ENCODE measurements at regions of chr22 and their contacts with region 1.

Region 1: DNA sequence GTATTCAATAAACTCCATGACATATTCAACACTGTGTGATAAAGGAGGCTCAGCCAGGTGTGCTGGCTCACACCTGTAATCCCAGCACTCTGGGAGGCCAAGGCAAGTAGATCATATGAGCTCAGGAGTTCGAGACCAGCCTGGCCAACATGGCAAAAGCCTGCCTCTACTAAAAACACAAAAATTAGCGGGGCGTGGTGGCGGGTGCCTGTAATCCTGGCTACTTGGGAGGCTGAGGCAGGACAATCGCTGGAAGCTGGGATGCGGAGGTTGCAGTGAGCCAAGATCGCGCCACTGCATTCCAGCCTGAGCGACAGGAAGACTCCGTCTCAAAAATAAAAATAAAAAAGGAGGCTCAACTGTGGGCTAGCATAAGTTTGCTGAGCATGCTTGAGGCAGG is 4.1 kb upstream of the SLC25A18 start:
- DNase-seq: no peak
- H3K4me3 ChIP-seq: no peak overlapping the region
- H3K27ac ChIP-seq: no peak overlapping the region
- H3K4me1 ChIP-seq: no peaks in the 10 kb centered on the region
- H3K27me3 ChIP-seq: no peaks in the 10 kb centered on the region; the same call in 1 of the 2 replicates
- CTCF ChIP-seq: no peak
- EP300 ChIP-seq: no peak
- RAD21 ChIP-seq: no peak

Region 2: DNA sequence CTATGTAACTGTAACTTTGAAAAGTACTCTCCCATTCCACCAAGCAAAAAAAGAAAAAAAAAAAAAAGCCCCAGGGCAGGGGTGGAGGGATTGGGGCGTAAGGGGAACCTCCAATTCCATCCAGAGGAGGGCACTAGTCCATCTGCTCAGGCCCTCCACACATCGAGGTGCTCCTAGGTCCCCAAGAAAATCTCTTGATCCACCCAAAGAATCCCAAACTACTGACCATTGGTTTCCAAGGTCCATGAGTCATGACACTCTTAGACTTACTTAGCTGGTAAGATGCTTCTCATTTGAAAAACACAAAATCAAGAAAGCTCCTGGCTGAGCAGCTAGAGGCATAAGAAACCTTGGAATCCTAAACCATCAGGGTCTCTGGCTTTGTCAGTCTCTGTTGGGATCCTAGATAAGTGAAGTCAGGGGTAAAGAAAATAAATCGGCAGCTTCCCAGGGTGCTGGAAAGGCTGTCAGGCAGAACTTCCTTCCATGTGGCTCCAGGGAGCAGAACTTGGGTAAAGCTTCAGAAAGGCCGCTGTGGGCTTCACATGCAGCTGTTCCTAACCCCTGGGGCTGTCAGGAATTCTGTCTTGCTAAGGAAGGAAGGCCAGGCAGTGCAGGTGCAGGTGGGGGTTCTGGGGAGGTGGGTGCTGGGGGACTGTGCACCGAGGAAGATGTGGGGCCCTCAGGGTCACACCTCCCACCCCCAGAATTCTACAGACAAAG is 290.5 kb before region 1 on chr22:
- CTCF ChIA-PET with region 1: no interaction called
- POLR2A ChIA-PET with region 1: no interaction called
- DNase-seq: no peak
- H3K4me3 ChIP-seq: no peak overlapping the region
- H3K27ac ChIP-seq: no peak overlapping the region
- H3K4me1 ChIP-seq: peaks cover 7 to 10% of the 10 kb centered on the region in 2 experiments; a peak in 2 of 4 replicates
- H3K27me3 ChIP-seq: no peaks in the 10 kb centered on the region
- CTCF ChIP-seq: peak; percentile 24
- EP300 ChIP-seq: no peak
- RAD21 ChIP-seq: no peak

Region 3: DNA sequence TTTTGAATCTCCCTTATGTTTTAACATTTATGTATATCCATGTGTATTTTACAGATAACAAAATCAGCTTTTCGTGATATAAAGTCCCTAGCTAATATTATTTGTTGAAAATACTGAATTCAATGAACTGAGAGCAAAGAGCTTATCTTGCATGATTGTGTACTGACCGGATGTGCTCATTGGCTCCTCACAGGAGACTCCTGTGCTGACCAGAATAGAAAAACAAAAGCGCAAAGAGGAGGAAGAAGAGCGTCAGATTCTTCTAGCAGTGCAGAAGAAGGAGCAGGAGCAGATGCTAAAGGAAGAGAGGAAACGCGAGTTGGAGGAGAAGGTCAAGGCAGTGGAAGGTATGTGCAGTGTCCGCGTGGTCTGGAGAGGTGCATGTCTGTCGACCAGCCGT is 35.3 kb before region 1 on chr22:
- CTCF ChIA-PET with region 1: no interaction called
- POLR2A ChIA-PET with region 1: no interaction called
- DNase-seq: no peak
- H3K4me3 ChIP-seq: no peak overlapping the region
- H3K27ac ChIP-seq: no peak overlapping the region
- H3K4me1 ChIP-seq: peaks cover 0 to 2% of the 10 kb centered on the region in 2 experiments; a peak in 1 of 4 replicates
- H3K27me3 ChIP-seq: peaks cover 28% of the 10 kb centered on the region; the same call in 1 of the 2 replicates
- CTCF ChIP-seq: no peak
- EP300 ChIP-seq: no peak
- RAD21 ChIP-seq: no peak

Region 4: DNA sequence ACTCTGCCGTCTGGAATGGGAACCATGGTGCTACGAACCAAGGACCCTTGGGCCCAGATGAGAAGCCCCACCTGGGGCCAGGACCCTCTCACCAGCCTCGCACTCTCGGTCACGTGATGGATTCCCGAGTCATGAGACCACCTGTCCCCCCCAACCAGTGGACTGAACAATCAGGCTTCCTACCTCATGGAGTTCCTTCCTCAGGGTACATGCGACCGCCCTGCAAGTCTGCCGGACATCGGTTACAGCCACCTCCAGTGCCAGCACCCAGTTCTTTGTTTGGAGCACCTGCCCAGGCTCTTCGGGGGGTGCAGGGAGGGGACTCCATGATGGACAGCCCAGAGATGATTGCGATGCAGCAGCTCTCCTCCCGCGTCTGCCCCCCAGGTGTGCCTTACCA is 16.7 kb before region 1 on chr22:
- CTCF ChIA-PET with region 1: interaction called, 19 read pairs
- POLR2A ChIA-PET with region 1: no interaction called
- DNase-seq: no peak
- H3K4me3 ChIP-seq: no peak overlapping the region
- H3K27ac ChIP-seq: no peak overlapping the region
- H3K4me1 ChIP-seq: no peaks in the 10 kb centered on the region
- H3K27me3 ChIP-seq: no peaks in the 10 kb centered on the region; the same call in 1 of the 2 replicates
- CTCF ChIP-seq: no peak
- EP300 ChIP-seq: no peak
- RAD21 ChIP-seq: no peak

Region 5: DNA sequence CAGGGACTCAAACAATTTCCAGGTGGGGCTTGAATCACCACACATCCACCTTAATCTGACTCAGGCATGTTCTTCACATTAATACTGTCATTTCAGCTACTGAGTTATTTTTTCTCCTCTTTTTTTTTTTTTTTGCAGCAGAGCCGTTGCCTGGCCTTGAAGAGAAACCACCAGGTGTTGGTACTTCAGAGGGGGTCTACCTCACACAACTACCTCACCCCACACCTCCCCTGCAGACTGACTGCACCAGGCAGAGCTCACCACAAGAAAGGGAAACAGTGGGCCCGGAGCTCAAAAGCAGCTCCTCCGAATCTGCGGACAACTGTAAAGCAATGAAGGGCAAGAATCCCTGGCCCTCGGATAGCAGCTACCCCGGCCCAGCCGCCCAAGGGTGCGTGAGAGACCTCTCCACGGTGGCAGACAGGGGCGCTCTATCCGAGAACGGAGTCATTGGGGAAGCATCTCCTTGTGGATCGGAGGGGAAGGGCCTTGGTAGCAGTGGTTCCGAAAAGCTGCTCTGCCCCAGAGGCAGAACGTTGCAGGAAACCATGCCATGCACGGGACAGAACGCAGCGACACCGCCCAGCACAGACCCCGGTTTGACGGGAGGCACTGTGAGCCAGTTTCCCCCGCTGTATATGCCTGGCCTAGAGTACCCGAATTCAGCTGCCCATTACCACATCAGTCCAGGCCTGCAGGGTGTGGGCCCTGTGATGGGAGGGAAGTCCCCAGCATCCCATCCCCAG is 11.0 kb before region 1 on chr22:
- CTCF ChIA-PET with region 1: interaction called, 19 read pairs
- POLR2A ChIA-PET with region 1: no interaction called
- DNase-seq: no peak
- H3K4me3 ChIP-seq: no peak overlapping the region
- H3K27ac ChIP-seq: no peak overlapping the region
- H3K4me1 ChIP-seq: no peaks in the 10 kb centered on the region
- H3K27me3 ChIP-seq: no peaks in the 10 kb centered on the region
- CTCF ChIP-seq: no peak
- EP300 ChIP-seq: no peak
- RAD21 ChIP-seq: no peak

Region 6: GRCh38 chr22:17570851-17571641 is 11.9 kb after region 1 on chr22:
- CTCF ChIA-PET with region 1: interaction called, 11 read pairs
- POLR2A ChIA-PET with region 1: no interaction called
- DNase-seq: no peak
- H3K4me3 ChIP-seq: no peak overlapping the region
- H3K27ac ChIP-seq: no peak overlapping the region
- H3K4me1 ChIP-seq: no peaks in the 10 kb centered on the region; a peak in 2 of 4 replicates
- H3K27me3 ChIP-seq: no peaks in the 10 kb centered on the region
- CTCF ChIP-seq: no peak
- EP300 ChIP-seq: no peak
- RAD21 ChIP-seq: no peak

Region 7: GRCh38 chr22:17606496-17606895 is 47.3 kb after region 1 on chr22:
- CTCF ChIA-PET with region 1: interaction called, 12 read pairs
- POLR2A ChIA-PET with region 1: no interaction called
- DNase-seq: peak; percentile 42
- H3K4me3 ChIP-seq: no peak overlapping the region
- H3K27ac ChIP-seq: no peak overlapping the region; a peak in 1 of 4 replicates
- H3K4me1 ChIP-seq: peaks cover 0 to 5% of the 10 kb centered on the region in 2 experiments; a peak in 1 of 4 replicates
- H3K27me3 ChIP-seq: no peaks in the 10 kb centered on the region
- CTCF ChIP-seq: no peak
- EP300 ChIP-seq: no peak
- RAD21 ChIP-seq: no peak

Region 8: DNA sequence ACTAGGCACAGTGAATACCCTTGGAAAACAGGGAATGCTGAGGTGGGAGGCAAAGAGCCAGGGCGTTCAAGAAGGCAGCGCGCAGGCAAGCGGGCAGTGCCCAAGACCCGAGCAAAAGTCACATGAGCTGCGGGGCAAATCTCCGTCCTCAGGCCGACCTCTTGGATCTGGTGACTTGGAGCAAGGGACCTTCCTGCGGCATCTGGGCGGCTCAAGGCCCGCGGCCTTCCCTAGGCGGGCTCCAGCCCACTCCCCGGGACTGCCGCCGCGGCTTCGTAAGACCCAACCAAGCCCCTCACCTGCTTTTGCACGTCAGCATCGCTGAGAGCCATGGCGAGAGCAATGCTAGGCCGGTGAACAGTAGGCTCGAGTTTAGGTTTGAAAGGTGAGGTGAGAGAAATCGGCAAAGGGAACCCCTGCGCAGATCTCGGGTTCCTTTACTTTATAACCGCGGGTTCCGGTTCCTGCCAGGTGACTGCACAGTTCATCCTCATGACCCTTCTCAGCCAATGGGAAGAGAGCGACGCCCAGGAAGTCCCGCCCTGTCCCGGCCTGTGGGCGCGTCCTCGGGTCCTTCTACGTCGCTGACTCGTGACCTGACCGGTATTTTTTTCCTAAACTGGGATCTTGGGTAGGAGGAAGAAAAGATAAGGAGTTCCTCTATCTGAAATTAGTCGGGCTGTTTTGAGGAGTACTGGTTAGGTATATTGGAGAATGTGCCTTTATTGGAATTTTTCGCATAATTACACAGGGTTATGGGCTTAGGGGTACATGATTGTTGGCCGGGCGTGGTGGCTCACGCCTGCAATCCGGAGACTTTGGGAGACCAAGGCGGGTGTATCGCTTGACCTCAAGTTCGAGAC is 69.3 kb after region 1 on chr22 and contains the start of gene ATP6V1E1:
- CTCF ChIA-PET with region 1: no interaction called
- POLR2A ChIA-PET with region 1: no interaction called
- DNase-seq: peak; percentile 95
- H3K4me3 ChIP-seq: peak within 1 kb of the TSS; percentile 73 to 98
- H3K27ac ChIP-seq: peak within 1 kb of the TSS; percentile 72 to 89
- H3K4me1 ChIP-seq: peaks cover 0 to 18% of the 10 kb centered on the region in 2 experiments; a peak in 1 of 4 replicates
- H3K27me3 ChIP-seq: no peaks in the 10 kb centered on the region
- CTCF ChIP-seq: no peak
- EP300 ChIP-seq: no peak
- RAD21 ChIP-seq: peak; percentile 12; the same call in 1 of the 2 replicates
- polyA plus RNA-seq, gene ATP6V1E1: 140 and 195 TPM in 2 replicates

Region 9: GRCh38 chr22:17742527-17742902 is 183.3 kb after region 1 on chr22:
- CTCF ChIA-PET with region 1: interaction called, 40 read pairs
- POLR2A ChIA-PET with region 1: no interaction called
- DNase-seq: peak; percentile 93
- H3K4me3 ChIP-seq: no peak overlapping the region
- H3K27ac ChIP-seq: no peak overlapping the region
- H3K4me1 ChIP-seq: peaks cover 0 to 2% of the 10 kb centered on the region in 2 experiments; a peak in 1 of 4 replicates
- H3K27me3 ChIP-seq: no peaks in the 10 kb centered on the region
- CTCF ChIP-seq: peak; percentile 76
- EP300 ChIP-seq: no peak
- RAD21 ChIP-seq: peak; percentile 86

Region 10: GRCh38 chr22:17773606-17774205 is 214.5 kb after region 1 on chr22:
- CTCF ChIA-PET with region 1: interaction called, 29 read pairs
- POLR2A ChIA-PET with region 1: no interaction called
- DNase-seq: peak; percentile 93
- H3K4me3 ChIP-seq: peak overlapping the region; percentile 73 to 81
- H3K27ac ChIP-seq: peak overlapping the region in 1 of 2 experiments; percentile 79; a peak in 2 of 4 replicates
- H3K4me1 ChIP-seq: peaks cover 12 to 35% of the 10 kb centered on the region in 2 experiments; a peak in 2 of 4 replicates
- H3K27me3 ChIP-seq: no peaks in the 10 kb centered on the region
- CTCF ChIP-seq: no peak
- EP300 ChIP-seq: no peak
- RAD21 ChIP-seq: no peak

Region 11: GRCh38 chr22:17853073-17853472 is 293.9 kb after region 1 on chr22:
- CTCF ChIA-PET with region 1: no interaction called
- POLR2A ChIA-PET with region 1: no interaction called
- DNase-seq: no peak
- H3K4me3 ChIP-seq: no peak overlapping the region
- H3K27ac ChIP-seq: no peak overlapping the region
- H3K4me1 ChIP-seq: peaks cover 0 to 3% of the 10 kb centered on the region in 2 experiments; a peak in 1 of 4 replicates
- H3K27me3 ChIP-seq: no peaks in the 10 kb centered on the region
- CTCF ChIP-seq: no peak
- EP300 ChIP-seq: no peak
- RAD21 ChIP-seq: no peak